ENCODE measurements at regions of chr10 and their contacts with region 1.

Region 1: GRCh38 chr10:102394079-102394800 is 1.3 kb upstream of the NFKB2 start:
- DNase-seq: peak; percentile 95 to 96
- ATAC-seq: peak; percentile 87 to 90 (median 90)
- H3K4me3 ChIP-seq: peak overlapping the region; percentile 75
- H3K27ac ChIP-seq: peak overlapping the region; percentile 97
- H3K4me1 ChIP-seq: peaks cover 23% of the 10 kb centered on the region
- H3K27me3 ChIP-seq: no peaks in the 10 kb centered on the region
- CTCF ChIP-seq: no peak

Region 2: DNA sequence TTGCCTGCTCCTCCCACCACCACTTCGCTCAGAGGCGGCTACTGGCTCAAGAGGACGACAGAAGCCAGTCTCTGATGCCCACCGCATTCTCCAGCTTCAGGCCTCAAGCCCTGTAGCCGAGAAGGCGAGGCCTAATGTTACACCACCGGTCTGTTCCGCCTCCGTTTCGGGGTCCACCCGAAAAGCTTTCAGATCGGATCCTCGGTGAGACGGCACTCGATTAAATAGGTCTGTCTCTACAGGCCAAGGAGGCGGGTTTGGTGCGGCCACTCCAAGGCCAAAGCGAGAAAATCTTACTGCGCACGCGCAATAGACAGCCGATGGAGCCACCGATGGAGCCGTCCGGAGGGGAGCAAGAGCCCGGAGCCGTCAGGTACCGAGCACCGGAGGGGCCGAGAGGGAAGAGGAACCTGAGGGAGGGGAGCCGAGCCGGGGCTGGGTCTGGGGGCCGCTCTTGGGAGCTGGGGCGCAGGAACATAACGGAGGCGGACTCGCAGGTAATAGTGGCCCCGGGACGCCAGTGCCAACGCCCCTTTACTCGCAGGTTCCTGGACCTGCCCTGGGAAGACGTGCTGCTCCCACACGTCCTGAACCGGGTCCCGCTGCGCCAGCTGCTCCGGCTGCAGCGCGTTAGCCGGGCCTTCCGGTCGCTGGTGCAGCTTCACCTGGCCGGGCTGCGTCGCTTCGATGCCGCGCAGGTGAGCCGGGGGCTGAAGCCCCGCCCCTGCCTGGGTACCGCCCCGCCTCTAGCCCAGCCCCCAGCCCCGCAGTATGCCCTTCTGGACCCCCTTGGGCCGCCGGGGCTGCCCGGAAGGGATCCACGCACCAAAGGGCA is 26.8 kb after region 1 on chr10 and contains the start of gene FBXL15:
- intact Hi-C with region 1: loop called in 1 of 2 experiments (anchors 2 kb)
- DNase-seq: peak; percentile 95 to 98
- ATAC-seq: peak; percentile 89 to 91 (median 90)
- H3K4me3 ChIP-seq: peak within 1 kb of the TSS; percentile 98
- H3K27ac ChIP-seq: peak within 1 kb of the TSS; percentile 87
- H3K4me1 ChIP-seq: peaks cover 20% of the 10 kb centered on the region
- H3K27me3 ChIP-seq: peaks cover 0 to 23% (median 2%) of the 10 kb centered on the region in 3 donors
- CTCF ChIP-seq: no peak
- total RNA-seq, gene FBXL15: 7.9 to 13.3 (median 9.5) TPM

Region 3: GRCh38 chr10:102476466-102477141 is 82.4 kb after region 1 on chr10:
- intact Hi-C with region 1: loop called in 1 of 2 experiments (anchors 2 kb)
- DNase-seq: peak in 1 of 2 donors; percentile 45
- ATAC-seq: no peak
- H3K4me3 ChIP-seq: no peak overlapping the region
- H3K27ac ChIP-seq: peak overlapping the region; percentile 16
- H3K4me1 ChIP-seq: no peaks in the 10 kb centered on the region
- H3K27me3 ChIP-seq: no peaks in the 10 kb centered on the region
- CTCF ChIP-seq: no peak

Region 4: GRCh38 chr10:102523250-102524029 is 129.2 kb after region 1 on chr10:
- intact Hi-C with region 1: no loop called
- DNase-seq: peak; percentile 40 to 69
- ATAC-seq: peak in 1 of 4 donors; percentile 62
- H3K4me3 ChIP-seq: no peak overlapping the region
- H3K27ac ChIP-seq: peak overlapping the region; percentile 30
- H3K4me1 ChIP-seq: no peaks in the 10 kb centered on the region
- H3K27me3 ChIP-seq: no peaks in the 10 kb centered on the region
- CTCF ChIP-seq: no peak

Region 5: GRCh38 chr10:102583435-102584417 is 189.5 kb after region 1 on chr10:
- intact Hi-C with region 1: loop called (anchors 2 to 10 kb)
- DNase-seq: peak; percentile 79 to 89
- ATAC-seq: peak; percentile 96 to 98 (median 96)
- H3K4me3 ChIP-seq: no peak overlapping the region
- H3K27ac ChIP-seq: peak overlapping the region; percentile 28
- H3K4me1 ChIP-seq: peaks cover 9% of the 10 kb centered on the region
- H3K27me3 ChIP-seq: no peaks in the 10 kb centered on the region
- CTCF ChIP-seq: peak; percentile 89